Right ventricle myocardium superior (tissue), 1 donor: ENCODE measurements at regions of chr9 and their contacts with region 1.

Region 1: DNA sequence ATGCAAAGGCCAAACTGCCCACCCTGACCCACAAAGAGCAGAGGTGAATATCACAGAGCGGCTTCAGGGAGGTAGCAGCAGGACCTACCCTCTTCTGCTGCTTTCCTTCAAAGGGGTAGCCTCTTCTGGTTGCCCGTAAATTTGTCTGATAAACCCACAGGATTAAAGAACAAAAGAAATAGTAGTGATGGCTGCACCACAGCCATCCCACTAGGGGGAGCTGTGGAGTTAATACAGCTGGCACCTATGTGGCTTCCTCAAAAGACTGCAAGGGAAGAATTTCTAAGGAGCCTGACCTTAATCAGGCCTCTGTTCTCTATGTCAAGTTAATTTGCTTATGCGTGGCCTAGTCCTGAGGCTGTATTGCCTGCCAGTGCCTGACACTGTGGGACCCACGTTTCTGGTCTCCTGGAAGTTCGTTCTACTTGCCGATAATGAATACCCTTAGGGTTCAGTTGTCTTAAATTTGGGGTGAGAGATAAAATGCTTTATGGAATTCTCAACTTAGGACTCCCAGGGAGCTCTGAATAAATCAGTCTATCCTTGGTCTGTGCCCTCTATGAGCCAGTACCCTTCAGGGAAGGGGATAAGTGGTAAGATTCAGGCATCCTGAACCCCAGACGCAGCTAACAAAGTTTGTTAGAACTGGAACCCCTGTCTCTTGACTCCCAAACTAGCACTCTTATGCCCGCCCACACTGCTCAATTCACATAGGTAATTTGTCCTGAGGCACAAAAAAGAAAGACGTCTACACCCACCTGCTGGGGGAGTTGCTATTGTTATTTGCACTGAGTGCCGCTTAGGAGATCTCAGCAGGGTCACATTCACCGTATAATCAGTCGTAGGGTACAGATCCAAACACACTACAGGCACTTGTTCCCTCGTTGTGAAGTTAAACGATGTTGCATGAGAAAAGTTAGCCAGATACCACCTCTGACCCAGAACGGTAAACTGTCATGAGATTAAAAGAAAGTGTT is 77.1 kb downstream of the SUSD1 start:
- DNase-seq: peak; percentile 54
- ATAC-seq: peak; percentile 92

Region 2: GRCh38 chr9:111866976-111867375 is 231.0 kb before region 1 on chr9:
- intact Hi-C with region 1: no loop called
- DNase-seq: no peak
- ATAC-seq: no peak

Region 3: GRCh38 chr9:112348257-112349007 is 250.4 kb after region 1 on chr9:
- intact Hi-C with region 1: loop called (anchors 5 kb)
- DNase-seq: peak; percentile 94
- ATAC-seq: peak; percentile 97

Region 4: GRCh38 chr9:112361601-112362000 is 263.6 kb after region 1 on chr9:
- intact Hi-C with region 1: loop called (anchors 5 kb)
- DNase-seq: no peak
- ATAC-seq: peak; percentile 53